ENCODE measurements at regions of chr2 and their contacts with region 1.

Region 1: DNA sequence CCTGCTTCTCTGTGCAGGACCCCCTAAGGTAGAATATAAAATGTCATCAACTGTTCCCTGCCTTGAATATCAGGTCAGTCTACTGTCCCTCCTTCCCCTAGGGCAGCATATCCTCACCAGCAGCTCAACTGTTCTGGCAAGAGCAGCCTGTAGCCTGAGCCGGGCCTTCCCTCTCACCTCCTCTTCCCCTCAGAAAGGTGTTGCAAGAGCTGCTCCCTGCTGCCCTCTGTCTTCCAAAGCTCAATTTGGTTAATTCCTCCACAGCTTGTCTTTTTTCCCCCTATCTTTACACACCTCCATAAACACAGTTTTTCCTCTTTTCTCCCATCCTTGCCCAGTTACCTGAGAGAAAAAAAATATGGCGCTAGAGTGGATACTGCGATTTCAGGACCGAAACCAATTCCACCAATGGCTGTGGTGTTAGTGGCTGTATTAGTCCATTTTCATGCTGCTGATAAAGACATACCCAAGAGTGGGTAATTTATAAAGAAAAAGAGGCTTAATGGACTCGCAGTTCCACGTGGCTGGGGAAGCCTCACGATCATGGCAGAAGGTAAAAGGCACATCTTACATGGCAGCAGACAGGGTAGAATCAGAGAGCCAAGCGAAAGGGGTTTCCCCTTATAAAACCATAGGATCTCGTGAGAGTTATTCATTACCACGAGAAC is 184.7 kb downstream of the MREG start:
- DNase-seq: no peak

Region 2: DNA sequence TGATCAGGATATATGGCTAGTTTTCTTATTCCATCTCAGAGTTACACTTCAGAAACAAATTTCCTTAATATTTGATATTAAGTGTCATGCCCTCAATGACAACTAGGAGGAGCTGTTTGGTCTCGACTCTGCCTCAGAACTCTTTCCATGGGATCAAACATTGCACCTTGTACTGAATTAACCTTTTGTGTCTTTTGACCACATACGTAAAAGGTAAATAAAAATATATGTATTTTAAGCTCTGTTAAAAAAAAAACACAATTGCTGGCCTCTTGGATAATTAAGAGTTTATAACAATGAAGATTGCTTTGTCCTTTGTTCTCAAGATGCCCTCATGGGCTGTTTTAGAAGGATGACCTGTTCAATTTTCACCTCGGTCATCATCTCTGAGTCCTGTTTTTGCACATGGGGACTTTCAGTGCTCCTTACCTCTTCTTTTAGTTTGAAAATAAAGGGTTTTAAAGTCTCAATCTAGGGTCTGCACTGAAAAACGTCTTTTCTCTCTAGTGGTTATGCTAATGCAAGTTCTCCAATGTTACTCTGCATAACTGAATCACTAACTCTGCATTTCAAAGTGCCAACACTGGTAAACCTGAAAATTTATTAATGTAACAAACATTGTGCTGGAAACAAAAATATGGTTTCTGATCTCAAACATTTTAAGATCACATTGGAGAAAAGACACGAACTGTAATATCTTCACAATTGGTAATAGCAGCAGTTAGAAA is 374.0 kb before region 1 on chr2:
- intact Hi-C with region 1: loop called (anchors 5 kb)
- DNase-seq: no peak

Region 3: GRCh38 chr2:215476424-215476823 is 352.2 kb before region 1 on chr2:
- intact Hi-C with region 1: no loop called
- DNase-seq: no peak

Measured in cardiac septum (tissue), 1 donor.